ENCODE measurements at regions of chr3 and their contacts with region 1.

Region 1: DNA sequence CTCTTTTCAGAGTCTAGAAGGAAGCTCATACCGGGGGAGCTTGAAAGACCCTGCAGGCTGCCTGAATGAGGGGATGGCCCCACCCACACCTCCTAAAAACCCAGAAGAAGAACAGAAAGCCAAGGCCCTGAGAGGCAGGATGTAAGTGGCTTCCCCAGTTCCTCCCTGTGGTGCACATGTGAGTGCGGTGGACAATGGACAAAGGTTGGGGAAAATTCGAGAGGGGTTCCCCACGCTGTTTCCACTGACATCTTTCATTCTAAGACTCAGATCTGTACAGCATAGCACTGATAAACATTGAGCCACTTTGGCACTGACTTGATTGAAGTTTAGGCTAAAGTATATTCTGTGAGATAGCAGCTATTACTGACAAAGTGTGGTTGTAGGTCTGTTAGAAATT is 79.5 kb upstream of the UMPS start:
- DNase-seq: peak; percentile 65
- ATAC-seq: peak; percentile 89
- H3K4me3 ChIP-seq: no peak overlapping the region
- H3K27ac ChIP-seq: peak overlapping the region; percentile 49
- H3K4me1 ChIP-seq: peaks cover 31% of the 10 kb centered on the region
- H3K27me3 ChIP-seq: no peaks in the 10 kb centered on the region
- CTCF ChIP-seq: no peak
- EP300 ChIP-seq: peak; percentile 92 to 96; a peak in 3 of 4 replicates
- POLR2A ChIP-seq: no peak
- RAD21 ChIP-seq: no peak

Region 2: GRCh38 chr3:124576565-124577493 is 74.0 kb before region 1 on chr3:
- CTCF ChIA-PET with region 1: interaction called, 18 read pairs
- POLR2A ChIA-PET with region 1: interaction called, 5 read pairs
- RAD21 ChIA-PET with region 1: interaction called, 31 read pairs
- SMC1A ChIA-PET with region 1: interaction called, 35 read pairs
- in situ Hi-C with region 1: no loop called
- intact Hi-C with region 1: no loop called
- DNase-seq: peak; percentile 30
- ATAC-seq: peak; percentile 84
- H3K4me3 ChIP-seq: no peak overlapping the region
- H3K27ac ChIP-seq: no peak overlapping the region
- H3K4me1 ChIP-seq: peaks cover 32% of the 10 kb centered on the region
- H3K27me3 ChIP-seq: no peaks in the 10 kb centered on the region
- CTCF ChIP-seq: peak; percentile 11 to 43 (median 43); a peak in 4 of 6 replicates
- EP300 ChIP-seq: peak in 1 of 2 experiments; percentile 56; a peak in 1 of 4 replicates
- POLR2A ChIP-seq: no peak
- RAD21 ChIP-seq: peak; percentile 19; the same call in 1 of the 2 replicates

Region 3: DNA sequence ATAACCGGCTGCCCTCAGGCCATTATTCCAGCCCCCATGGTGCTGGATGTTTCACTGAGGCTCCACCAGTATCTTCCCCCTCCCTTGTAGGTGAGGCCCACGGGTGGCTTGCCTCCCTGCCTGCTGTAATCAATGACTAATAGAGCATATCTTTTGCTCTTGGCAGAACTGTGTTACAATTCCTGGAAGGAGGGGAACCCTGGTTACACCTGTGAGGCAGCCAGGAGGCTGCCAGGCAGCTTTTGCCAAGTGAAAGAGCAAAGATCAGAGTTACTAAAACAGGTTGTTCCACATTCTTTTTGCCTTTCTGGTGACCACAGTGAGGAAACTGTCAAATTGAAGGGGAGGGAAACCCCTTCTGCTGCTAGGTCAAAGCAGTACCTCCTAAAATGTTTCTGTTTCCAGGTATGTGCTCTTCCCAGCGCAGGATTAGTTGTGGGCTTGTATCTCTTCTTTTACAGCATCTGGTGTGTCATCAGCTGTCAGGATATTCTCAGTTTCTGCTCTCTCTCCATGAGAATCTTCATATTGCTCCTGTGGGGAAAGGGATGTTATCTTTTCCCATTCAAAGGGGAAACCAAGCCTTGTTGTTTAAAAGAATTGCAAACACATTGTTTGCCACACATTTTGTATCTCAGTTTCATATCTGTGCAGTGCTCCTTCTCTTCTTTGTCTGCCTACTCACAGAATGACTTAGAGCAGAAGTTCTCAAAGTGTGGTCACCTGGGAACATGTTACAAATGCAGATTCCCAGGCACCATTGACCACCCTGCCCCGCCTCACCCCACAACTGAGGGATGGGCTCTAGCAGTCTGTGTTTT is 58.0 kb before region 1 on chr3:
- CTCF ChIA-PET with region 1: interaction called, 4 read pairs
- POLR2A ChIA-PET with region 1: interaction called, 5 read pairs
- RAD21 ChIA-PET with region 1: interaction called, 5 read pairs
- SMC1A ChIA-PET with region 1: interaction called, 17 read pairs
- in situ Hi-C with region 1: no loop called
- intact Hi-C with region 1: loop called (anchors 5 kb)
- DNase-seq: peak; percentile 70
- ATAC-seq: peak; percentile 91
- H3K4me3 ChIP-seq: peak overlapping the region; percentile 7; the same call in 1 of the 2 replicates
- H3K27ac ChIP-seq: peak overlapping the region; percentile 67
- H3K4me1 ChIP-seq: peaks cover 22% of the 10 kb centered on the region
- H3K27me3 ChIP-seq: no peaks in the 10 kb centered on the region
- CTCF ChIP-seq: no peak
- EP300 ChIP-seq: peak; percentile 11 to 14; a peak in 2 of 4 replicates
- POLR2A ChIP-seq: no peak
- RAD21 ChIP-seq: 0 out of 2 replicates have a peak, but pooled peaks have one; percentile 4

Region 4: DNA sequence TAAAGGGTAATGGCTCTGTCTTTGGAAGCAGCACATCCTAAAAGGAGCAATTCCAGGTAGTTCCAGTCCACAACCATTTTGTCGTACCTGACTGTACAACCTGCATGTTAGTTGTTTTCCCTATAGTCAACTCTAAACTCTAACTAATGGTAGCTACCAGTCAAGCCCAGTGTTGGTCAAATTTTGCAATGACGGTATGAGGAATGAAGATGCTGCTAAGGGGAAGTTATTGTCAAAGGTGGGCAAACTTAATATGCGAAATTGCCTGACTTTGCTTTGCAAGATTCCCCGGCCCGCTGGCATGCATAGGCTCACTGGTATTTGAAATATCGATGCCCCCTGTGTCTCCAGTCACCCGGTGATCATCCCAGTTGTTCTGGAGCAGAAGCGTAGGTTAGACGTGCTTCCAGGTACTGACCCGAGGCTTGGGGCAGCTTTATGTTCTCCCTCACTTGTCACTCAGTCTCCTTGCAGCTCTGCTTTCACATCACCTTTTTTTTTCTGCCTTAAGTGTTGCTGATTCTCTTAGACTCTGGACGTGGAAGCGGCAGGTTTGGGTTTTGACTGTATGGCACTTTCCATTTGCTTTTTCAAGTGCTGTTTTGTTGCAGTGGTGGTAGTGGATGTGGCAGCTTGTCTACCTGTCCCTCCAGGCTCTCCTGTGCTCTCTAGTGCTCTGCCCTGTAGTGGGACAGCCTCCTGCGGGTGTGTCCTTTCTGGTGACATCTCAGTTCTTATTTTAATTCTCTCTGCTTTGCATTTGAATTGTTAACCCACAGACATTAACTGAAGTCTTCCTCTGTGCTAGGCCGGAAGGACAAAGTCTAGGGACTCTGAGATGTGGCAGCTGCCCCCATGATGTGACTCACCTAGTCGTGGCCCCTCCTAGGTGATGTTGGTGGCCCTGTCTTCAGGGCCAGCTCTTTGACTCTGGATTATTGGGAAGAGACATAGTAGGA is 16.3 kb before region 1 on chr3:
- CTCF ChIA-PET with region 1: interaction called, 23 read pairs
- POLR2A ChIA-PET with region 1: interaction called, 25 read pairs
- RAD21 ChIA-PET with region 1: interaction called, 59 read pairs
- SMC1A ChIA-PET with region 1: interaction called, 43 read pairs
- in situ Hi-C with region 1: no loop called
- intact Hi-C with region 1: no loop called
- DNase-seq: no peak
- ATAC-seq: peak; percentile 53
- H3K4me3 ChIP-seq: no peak overlapping the region
- H3K27ac ChIP-seq: no peak overlapping the region
- H3K4me1 ChIP-seq: peaks cover 22% of the 10 kb centered on the region
- H3K27me3 ChIP-seq: no peaks in the 10 kb centered on the region
- CTCF ChIP-seq: no peak
- EP300 ChIP-seq: no peak
- POLR2A ChIP-seq: no peak
- RAD21 ChIP-seq: no peak